ENCODE measurements at regions of chr5 and their contacts with region 1.

Region 1: GRCh38 chr5:90558344-90559192 is at the start of gene ADGRV1:
- DNase-seq: peak; percentile 99
- ATAC-seq: peak; percentile 88
- H3K4me3 ChIP-seq: peak within 1 kb of the TSS; percentile 73
- H3K27ac ChIP-seq: peak within 1 kb of the TSS; percentile 29
- H3K4me1 ChIP-seq: peaks cover 49% of the 10 kb centered on the region
- H3K27me3 ChIP-seq: no peaks in the 10 kb centered on the region
- CTCF ChIP-seq: no peak
- total RNA-seq, gene ADGRV1: 22.7 and 27.2 TPM in 2 replicates

Region 2: DNA sequence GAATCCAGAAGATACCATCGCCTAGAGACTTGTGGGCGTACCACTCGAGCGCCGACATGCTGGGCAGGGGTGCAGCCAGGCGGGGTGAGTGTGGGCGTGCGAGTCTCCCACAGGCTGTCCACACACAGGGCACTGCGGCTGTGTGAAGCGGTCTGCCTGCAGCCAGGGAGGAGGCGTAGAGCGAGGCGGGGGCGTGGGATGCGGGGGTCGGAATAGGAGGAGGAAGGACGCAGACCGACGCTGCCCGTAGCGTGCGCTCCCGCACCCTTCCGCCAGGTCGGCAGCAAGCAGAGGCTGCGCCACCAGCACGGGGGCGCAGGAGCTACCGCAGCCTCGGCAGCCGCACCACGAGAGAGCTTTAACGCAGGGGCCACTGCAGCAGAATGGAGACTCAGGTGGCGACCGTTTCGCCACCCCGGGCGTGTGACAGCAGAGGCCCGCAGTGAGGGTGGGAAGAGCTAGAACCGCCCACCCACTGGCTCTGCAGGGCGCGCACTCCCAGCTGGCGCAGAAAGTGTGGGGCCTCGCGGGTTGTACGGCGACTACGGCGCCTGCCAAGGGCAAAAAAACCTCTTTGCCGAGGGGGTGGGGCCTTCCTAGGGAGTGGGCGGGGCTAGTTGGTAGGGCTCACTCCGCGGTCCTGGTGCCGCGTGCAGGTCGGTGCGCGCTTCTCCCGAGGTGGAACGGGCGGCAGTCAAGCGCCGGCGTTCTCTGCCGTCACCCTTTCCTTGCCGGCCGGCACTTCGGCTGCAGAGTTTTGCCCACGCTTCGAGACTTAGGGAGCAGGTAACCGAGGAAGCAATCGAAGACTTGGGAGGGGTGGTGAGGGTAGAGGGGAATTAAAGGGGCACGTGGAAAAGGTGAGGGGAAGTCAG is 84.1 kb before region 1 on chr5 and contains the starts of genes MBLAC2 and POLR3G:
- CTCF ChIA-PET with region 1: no interaction called
- POLR2A ChIA-PET with region 1: no interaction called
- intact Hi-C with region 1: loop called (anchors 1 kb)
- DNase-seq: peak; percentile 95
- ATAC-seq: peak; percentile 76
- H3K4me3 ChIP-seq: peak within 1 kb of the TSS; percentile 94
- H3K27ac ChIP-seq: peak within 1 kb of the TSS; percentile 68
- H3K4me1 ChIP-seq: peaks cover 29% of the 10 kb centered on the region
- H3K27me3 ChIP-seq: no peaks in the 10 kb centered on the region
- CTCF ChIP-seq: peak; percentile 48
- total RNA-seq, gene MBLAC2: 7.8 and 12.4 TPM in 2 replicates
- total RNA-seq, gene POLR3G: 34.6 and 42.2 TPM in 2 replicates

Region 3: GRCh38 chr5:90534922-90535321 is 23.6 kb before region 1 on chr5:
- CTCF ChIA-PET with region 1: interaction called, 4 read pairs
- POLR2A ChIA-PET with region 1: no interaction called
- intact Hi-C with region 1: loop called (anchors 1 kb)
- DNase-seq: peak; percentile 83
- ATAC-seq: peak; percentile 54
- H3K4me3 ChIP-seq: no peak overlapping the region
- H3K27ac ChIP-seq: peak overlapping the region; percentile 61
- H3K4me1 ChIP-seq: peaks cover 26% of the 10 kb centered on the region
- H3K27me3 ChIP-seq: no peaks in the 10 kb centered on the region
- CTCF ChIP-seq: no peak

Region 4: DNA sequence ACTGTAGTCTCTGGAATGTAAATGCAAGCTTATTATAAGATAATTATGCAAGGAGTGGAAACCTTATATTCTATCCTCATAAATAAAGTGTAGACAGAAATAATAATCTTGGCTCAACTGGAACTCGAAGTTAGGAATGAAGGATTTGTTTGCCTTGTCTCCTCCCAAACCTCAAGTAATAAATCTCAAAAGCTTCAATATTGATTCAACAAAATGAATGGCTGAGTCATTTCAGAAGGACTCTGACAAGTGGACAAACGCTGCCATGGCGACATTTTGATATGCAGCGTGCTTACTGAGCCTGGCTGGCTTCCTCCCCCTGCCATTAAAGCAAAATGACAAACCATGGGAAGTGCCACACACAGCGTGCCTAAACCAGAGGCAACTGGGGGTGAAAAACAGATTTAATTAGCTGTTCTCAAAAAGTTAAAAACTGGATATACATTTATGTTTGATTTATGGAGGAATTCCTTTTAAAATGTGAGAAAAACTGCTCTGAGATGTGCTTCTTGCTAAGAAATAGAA is 10.4 kb before region 1 on chr5:
- CTCF ChIA-PET with region 1: no interaction called
- POLR2A ChIA-PET with region 1: no interaction called
- intact Hi-C with region 1: loop called (anchors 1 kb)
- DNase-seq: peak; percentile 98
- ATAC-seq: peak; percentile 92
- H3K4me3 ChIP-seq: peak overlapping the region; percentile 49
- H3K27ac ChIP-seq: peak overlapping the region; percentile 70
- H3K4me1 ChIP-seq: peaks cover 37% of the 10 kb centered on the region
- H3K27me3 ChIP-seq: no peaks in the 10 kb centered on the region
- CTCF ChIP-seq: no peak

Region 5: GRCh38 chr5:90571147-90571773 is 12.7 kb after region 1 on chr5:
- CTCF ChIA-PET with region 1: no interaction called
- POLR2A ChIA-PET with region 1: interaction called, 9 read pairs
- intact Hi-C with region 1: loop called (anchors 1 kb)
- DNase-seq: peak; percentile 86
- ATAC-seq: peak; percentile 96
- H3K4me3 ChIP-seq: no peak overlapping the region
- H3K27ac ChIP-seq: peak overlapping the region; percentile 68
- H3K4me1 ChIP-seq: peaks cover 26% of the 10 kb centered on the region
- H3K27me3 ChIP-seq: no peaks in the 10 kb centered on the region
- CTCF ChIP-seq: no peak

Region 6: GRCh38 chr5:90606539-90606938 is 48.0 kb after region 1 on chr5:
- CTCF ChIA-PET with region 1: no interaction called
- POLR2A ChIA-PET with region 1: no interaction called
- intact Hi-C with region 1: loop called (anchors 2 kb)
- DNase-seq: peak; percentile 53
- ATAC-seq: peak; percentile 45; the same call in 1 of the 2 replicates
- H3K4me3 ChIP-seq: no peak overlapping the region
- H3K27ac ChIP-seq: no peak overlapping the region
- H3K4me1 ChIP-seq: peaks cover 11% of the 10 kb centered on the region
- H3K27me3 ChIP-seq: no peaks in the 10 kb centered on the region
- CTCF ChIP-seq: peak; percentile 86

Region 7: DNA sequence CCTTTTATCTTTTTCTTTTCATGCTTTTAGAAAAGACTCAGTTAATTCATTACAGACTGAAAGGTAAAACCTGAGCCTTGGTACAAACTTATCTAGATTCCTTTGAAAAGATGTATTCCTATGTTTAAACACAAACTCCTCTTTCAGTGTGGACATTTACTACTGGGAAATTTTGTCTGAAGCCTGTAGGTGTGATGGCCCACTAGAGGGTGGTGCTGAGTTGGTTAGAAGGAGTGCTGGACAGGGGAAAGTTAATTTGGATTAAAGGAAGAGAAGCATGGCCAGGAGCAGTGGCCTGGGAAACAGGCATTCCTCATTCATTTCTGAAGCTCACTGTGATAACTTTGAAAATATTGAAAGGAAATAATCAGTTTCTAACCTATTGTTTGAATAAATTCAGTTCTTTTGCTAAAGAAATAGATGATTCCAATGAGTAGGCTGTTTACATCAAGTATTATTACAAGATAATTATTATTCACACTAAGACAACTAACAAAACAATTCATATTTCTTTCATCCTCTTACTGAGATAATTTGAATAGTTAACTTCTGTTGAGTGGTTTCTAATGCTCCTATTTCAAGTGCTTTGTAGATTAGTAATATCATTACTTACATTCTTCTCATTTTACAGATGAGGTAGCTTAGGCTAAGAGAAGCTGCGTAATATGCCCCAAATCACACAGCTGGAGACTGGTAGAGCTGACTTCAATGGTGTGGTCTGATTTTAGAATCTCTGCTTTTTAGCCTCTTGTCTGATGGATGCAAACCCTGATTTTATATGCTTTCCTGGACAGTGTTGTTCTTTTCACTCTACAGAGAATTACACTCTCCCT is 151.0 kb after region 1 on chr5:
- CTCF ChIA-PET with region 1: no interaction called
- POLR2A ChIA-PET with region 1: no interaction called
- intact Hi-C with region 1: no loop called
- DNase-seq: peak; percentile 77
- ATAC-seq: peak; percentile 99
- H3K4me3 ChIP-seq: no peak overlapping the region
- H3K27ac ChIP-seq: no peak overlapping the region
- H3K4me1 ChIP-seq: no peaks in the 10 kb centered on the region
- H3K27me3 ChIP-seq: no peaks in the 10 kb centered on the region
- CTCF ChIP-seq: peak; percentile 97